Activated B cell treated with CpG ODN at 0.5 μM for 24 hours (primary cell): ENCODE measurements at regions of chr18 and their contacts with region 1.

Region 1: DNA sequence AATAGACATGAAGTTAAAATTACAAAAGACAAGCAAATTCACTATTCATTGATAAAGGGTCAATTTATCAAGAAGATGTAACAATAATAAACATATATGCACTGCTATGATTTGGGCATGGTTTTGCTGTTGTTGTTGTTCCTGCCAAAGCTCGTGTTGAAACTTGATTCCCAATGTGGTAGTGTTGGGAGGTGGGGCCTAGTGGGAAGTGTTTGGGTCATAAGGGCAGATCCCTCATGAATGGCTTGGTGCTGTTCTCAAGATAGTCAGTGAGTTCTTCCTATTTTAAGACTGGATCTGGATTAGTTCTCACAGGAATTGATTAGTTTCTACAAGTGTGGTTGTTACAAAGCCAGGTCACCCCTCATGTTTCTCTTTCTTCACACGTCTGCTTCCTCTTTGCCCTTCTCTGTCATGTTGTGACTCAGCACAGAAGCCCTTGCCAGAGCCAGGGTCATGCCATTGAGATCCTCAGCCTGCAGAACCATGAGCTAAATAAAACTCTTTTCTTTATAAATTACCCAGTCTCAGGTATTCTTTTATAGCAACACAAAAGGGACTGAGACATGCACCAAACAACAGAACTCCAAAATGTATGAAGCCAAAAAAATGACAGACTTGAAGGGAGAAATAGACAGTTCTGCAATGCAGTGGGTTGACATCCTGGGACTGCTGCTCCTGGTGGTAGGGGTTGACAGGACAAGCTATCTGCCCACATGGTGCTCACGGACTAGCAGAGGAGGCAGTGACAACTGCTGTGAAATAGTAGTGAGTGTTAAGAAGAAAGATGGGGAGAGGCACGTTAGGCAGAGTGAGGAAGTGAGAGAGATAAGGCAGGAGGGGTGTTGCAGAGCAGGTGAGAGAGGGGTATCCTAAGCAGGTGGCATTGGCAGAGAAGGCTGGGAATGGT is 18.6 kb upstream of the SKA1 start:
- DNase-seq: no peak
- ATAC-seq: peak; percentile 75
- H3K4me3 Mint-ChIP-seq: peak overlapping the region; percentile 50
- H3K27ac Mint-ChIP-seq: peak overlapping the region; percentile 30
- H3K4me1 Mint-ChIP-seq: peaks cover 19% of the 10 kb centered on the region
- H3K27me3 Mint-ChIP-seq: peaks cover 6% of the 10 kb centered on the region
- CTCF ChIP-seq: no peak

Region 2: DNA sequence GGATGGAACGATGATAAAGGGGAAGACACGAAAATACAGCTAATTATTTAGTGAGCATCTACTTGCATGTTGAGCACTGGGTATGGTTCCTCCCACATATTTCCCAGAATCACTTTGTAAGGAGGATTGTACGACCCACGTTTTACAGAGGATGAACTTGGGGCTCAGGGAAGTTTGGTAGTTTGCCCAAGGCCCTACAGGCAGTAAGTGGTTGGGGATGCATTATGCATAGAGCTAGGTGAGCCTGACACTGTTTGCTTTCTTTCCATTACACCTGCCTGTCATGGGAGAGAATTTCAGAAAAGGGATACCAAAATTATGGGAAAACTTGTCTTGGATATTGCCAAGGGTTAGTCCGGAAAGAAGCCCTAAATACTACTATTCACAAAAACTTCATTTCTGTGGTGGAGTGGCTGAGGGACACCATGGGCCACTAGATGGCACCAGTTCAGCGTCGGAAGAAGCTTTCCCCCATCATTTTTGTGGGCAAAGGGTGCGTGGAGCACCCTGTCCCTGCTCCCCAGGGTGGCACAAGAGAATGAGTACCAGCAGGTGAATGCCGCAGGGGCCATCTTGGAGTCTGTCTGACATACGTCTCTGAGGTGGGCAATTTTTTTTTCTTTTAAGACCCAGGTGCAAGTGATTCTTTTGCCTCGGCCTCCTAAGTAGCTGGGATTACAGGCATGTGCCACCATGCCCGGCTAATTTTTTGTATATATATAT is 845.7 kb before region 1 on chr18:
- CTCF ChIA-PET with region 1: interaction called, 17 read pairs
- POLR2A ChIA-PET with region 1: no interaction called
- intact Hi-C with region 1: no loop called
- DNase-seq: peak; percentile 32
- ATAC-seq: peak; percentile 67
- H3K4me3 Mint-ChIP-seq: no peak overlapping the region
- H3K27ac Mint-ChIP-seq: no peak overlapping the region
- H3K4me1 Mint-ChIP-seq: no peaks in the 10 kb centered on the region
- H3K27me3 Mint-ChIP-seq: peaks cover 18% of the 10 kb centered on the region
- CTCF ChIP-seq: no peak

Region 3: GRCh38 chr18:50194631-50195532 is 161.4 kb before region 1 on chr18 and contains the start of gene MYO5B:
- CTCF ChIA-PET with region 1: interaction called, 12 read pairs
- POLR2A ChIA-PET with region 1: no interaction called
- intact Hi-C with region 1: no loop called
- DNase-seq: peak; percentile 57
- ATAC-seq: peak; percentile 87
- H3K4me3 Mint-ChIP-seq: peak within 1 kb of the TSS; percentile 33
- H3K27ac Mint-ChIP-seq: no peak within 1 kb of the TSS
- H3K4me1 Mint-ChIP-seq: peaks cover 12% of the 10 kb centered on the region
- H3K27me3 Mint-ChIP-seq: peaks cover 53% of the 10 kb centered on the region
- CTCF ChIP-seq: no peak
- total RNA-seq, gene MYO5B: 0.49 and 0.51 TPM in 2 replicates

Region 4: GRCh38 chr18:50281295-50281971 is 74.9 kb before region 1 on chr18 and contains the start of gene MBD1:
- CTCF ChIA-PET with region 1: interaction called, 11 read pairs
- POLR2A ChIA-PET with region 1: interaction called, 20 read pairs
- intact Hi-C with region 1: loop called (anchors 1 kb)
- DNase-seq: peak; percentile 90
- ATAC-seq: peak; percentile 94
- H3K4me3 Mint-ChIP-seq: peak within 1 kb of the TSS; percentile 97
- H3K27ac Mint-ChIP-seq: peak within 1 kb of the TSS; percentile 93
- H3K4me1 Mint-ChIP-seq: peaks cover 38% of the 10 kb centered on the region
- H3K27me3 Mint-ChIP-seq: no peaks in the 10 kb centered on the region
- CTCF ChIP-seq: no peak
- total RNA-seq, gene MBD1: 101 and 117 TPM in 2 replicates

Region 5: GRCh38 chr18:50307738-50308470 is 48.4 kb before region 1 on chr18:
- CTCF ChIA-PET with region 1: interaction called, 19 read pairs
- POLR2A ChIA-PET with region 1: no interaction called
- intact Hi-C with region 1: no loop called
- DNase-seq: peak; percentile 68
- ATAC-seq: peak; percentile 97
- H3K4me3 Mint-ChIP-seq: peak overlapping the region; percentile 88
- H3K27ac Mint-ChIP-seq: peak overlapping the region; percentile 66
- H3K4me1 Mint-ChIP-seq: peaks cover 46% of the 10 kb centered on the region
- H3K27me3 Mint-ChIP-seq: no peaks in the 10 kb centered on the region
- CTCF ChIP-seq: no peak

Region 6: GRCh38 chr18:50340078-50340477 is 16.2 kb before region 1 on chr18:
- CTCF ChIA-PET with region 1: interaction called, 13 read pairs
- POLR2A ChIA-PET with region 1: no interaction called
- intact Hi-C with region 1: loop called (anchors 1 kb)
- DNase-seq: no peak
- ATAC-seq: no peak
- H3K4me3 Mint-ChIP-seq: no peak overlapping the region
- H3K27ac Mint-ChIP-seq: no peak overlapping the region
- H3K4me1 Mint-ChIP-seq: peaks cover 45% of the 10 kb centered on the region
- H3K27me3 Mint-ChIP-seq: no peaks in the 10 kb centered on the region
- CTCF ChIP-seq: no peak